ENCODE measurements at regions of chr4 and their contacts with region 1.

Region 1: DNA sequence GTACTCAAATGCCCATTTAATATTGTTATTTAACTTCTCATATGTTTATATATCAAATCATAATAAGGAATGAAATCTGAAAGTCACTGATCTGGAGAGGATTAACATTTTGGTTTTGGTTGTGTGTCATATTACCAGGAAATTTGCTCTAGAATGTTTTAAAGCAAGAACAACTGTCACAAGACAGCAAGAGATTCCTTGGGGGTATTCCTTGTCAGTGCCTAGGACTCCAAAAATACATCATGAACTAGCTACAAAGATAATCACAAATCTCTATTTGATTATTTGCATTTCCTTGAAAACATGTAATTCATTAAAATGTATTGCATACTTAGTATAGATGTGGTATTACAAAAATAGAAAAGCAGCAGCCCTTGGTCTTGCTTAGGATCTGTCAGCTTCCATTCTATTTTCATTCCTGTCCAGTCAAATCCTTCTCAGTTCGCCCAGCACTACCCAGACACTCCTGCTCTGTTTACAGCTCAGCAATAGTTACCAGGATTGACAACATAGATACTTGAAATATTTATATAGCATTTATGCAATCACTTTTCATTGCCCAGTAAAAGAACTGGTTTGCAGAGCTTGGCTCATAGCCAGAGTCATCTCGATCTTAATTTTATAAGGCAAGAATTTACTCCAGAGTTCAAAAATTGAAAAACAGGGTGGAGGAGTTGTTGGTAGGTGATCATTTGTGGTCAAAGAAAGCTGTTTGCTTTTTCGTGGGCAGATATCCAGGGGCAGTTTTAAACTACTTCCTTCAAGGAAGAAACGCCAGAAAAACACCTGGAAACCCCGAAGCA is 9.2 kb upstream of the BMP3 start:
- DNase-seq: no peak
- H3K4me3 ChIP-seq: no peak overlapping the region
- H3K4me3 Mint-ChIP-seq: no peak overlapping the region
- H3K27ac Mint-ChIP-seq: no peak overlapping the region
- H3K4me1 ChIP-seq: no peaks in the 10 kb centered on the region
- H3K4me1 Mint-ChIP-seq: no peaks in the 10 kb centered on the region
- H3K27me3 ChIP-seq: no peaks in the 10 kb centered on the region
- H3K27me3 Mint-ChIP-seq: peaks cover 21% of the 10 kb centered on the region
- CTCF ChIP-seq: no peak

Region 2: GRCh38 chr4:81007417-81007816 is 13.9 kb before region 1 on chr4:
- CTCF ChIA-PET with region 1: no interaction called
- POLR2A ChIA-PET with region 1: no interaction called
- intact Hi-C with region 1: no loop called
- DNase-seq: no peak
- H3K4me3 ChIP-seq: no peak overlapping the region
- H3K4me3 Mint-ChIP-seq: no peak overlapping the region
- H3K27ac Mint-ChIP-seq: no peak overlapping the region
- H3K4me1 ChIP-seq: no peaks in the 10 kb centered on the region
- H3K4me1 Mint-ChIP-seq: no peaks in the 10 kb centered on the region
- H3K27me3 ChIP-seq: no peaks in the 10 kb centered on the region
- H3K27me3 Mint-ChIP-seq: peaks cover 8% of the 10 kb centered on the region
- CTCF ChIP-seq: no peak

Region 3: DNA sequence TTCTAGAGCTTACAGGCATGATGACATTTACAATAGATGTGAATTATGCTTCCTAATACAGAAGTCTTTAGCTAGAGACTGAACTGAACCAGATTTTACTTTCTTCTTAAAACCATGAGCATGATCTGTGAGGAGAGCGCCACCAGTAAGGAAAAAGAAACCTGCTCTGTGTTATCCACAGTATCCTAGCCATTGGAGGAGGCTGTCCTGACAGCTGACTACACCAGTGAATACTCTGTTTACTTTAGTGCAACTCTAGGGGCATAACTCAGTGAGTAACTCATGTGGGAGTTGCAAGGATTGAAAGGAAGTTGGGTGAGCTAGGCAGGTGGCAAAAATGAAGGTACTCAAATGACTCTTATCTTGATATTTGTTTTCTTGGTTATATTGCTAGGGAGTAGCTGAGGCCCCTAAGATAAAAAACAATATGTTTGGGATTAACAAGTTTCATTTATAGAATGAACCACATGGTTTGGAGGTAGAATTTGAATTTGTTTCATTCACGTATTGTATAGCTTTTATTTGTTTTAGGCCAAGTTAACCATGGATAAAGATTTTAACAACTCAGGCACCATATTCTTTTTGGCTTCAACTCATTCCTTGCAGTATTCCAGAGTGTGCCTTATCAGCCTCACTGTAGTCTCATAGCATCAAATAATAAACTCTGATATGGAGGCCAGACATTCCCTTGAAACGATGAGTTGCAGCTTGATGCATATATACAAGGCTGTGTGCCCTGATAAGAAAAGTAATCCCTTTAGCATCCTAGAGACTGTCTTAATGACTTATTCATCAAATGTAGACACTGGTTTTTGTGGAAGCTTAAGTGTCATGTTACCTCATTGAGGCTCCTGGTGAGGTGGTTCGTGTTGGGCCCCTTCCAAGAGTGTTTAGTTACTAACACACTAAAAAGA is 11.7 kb after region 1 on chr4:
- CTCF ChIA-PET with region 1: interaction called, 10 read pairs
- POLR2A ChIA-PET with region 1: no interaction called
- intact Hi-C with region 1: no loop called
- DNase-seq: no peak
- H3K4me3 ChIP-seq: no peak overlapping the region
- H3K4me3 Mint-ChIP-seq: no peak overlapping the region
- H3K27ac Mint-ChIP-seq: no peak overlapping the region
- H3K4me1 ChIP-seq: no peaks in the 10 kb centered on the region
- H3K4me1 Mint-ChIP-seq: peaks cover 14% of the 10 kb centered on the region
- H3K27me3 ChIP-seq: peaks cover 1% of the 10 kb centered on the region; the same call in 1 of the 2 replicates
- H3K27me3 Mint-ChIP-seq: peaks cover 34% of the 10 kb centered on the region
- CTCF ChIP-seq: no peak

Measured in Caco-2 (cell line).